Activated T-helper 1 cell treated with anti-CD3 and anti-CD28 coated beads, Interleukin-12 subunit alpha, Interleukin-12 subunit beta, Interleukin-2, Interleukin-4 antibody, amounts not matched to agents 30 ng/mL and 10 ng/mL and 1 ng/mL, durations not matched to agents 14 hours and 24 hours and 36 hours (primary cell): ENCODE measurements at regions of chr16 and their contacts with region 1.

Region 1: GRCh38 chr16:53130159-53131049 is 75.6 kb downstream of the CHD9 start:
- DNase-seq: peak; percentile 92
- H3K4me3 Mint-ChIP-seq: peak overlapping the region; percentile 80
- H3K27ac Mint-ChIP-seq: peak overlapping the region; percentile 79
- H3K4me1 Mint-ChIP-seq: peaks cover 6% of the 10 kb centered on the region
- H3K27me3 Mint-ChIP-seq: peaks cover 9% of the 10 kb centered on the region

Region 2: GRCh38 chr16:53099318-53100130 is 30.9 kb before region 1 on chr16:
- intact Hi-C with region 1: loop called (anchors 1 kb)
- DNase-seq: peak; percentile 52
- H3K4me3 Mint-ChIP-seq: peak overlapping the region; percentile 79
- H3K27ac Mint-ChIP-seq: peak overlapping the region; percentile 93
- H3K4me1 Mint-ChIP-seq: peaks cover 36% of the 10 kb centered on the region
- H3K27me3 Mint-ChIP-seq: no peaks in the 10 kb centered on the region

Region 3: GRCh38 chr16:53207810-53208752 is 77.7 kb after region 1 on chr16:
- intact Hi-C with region 1: loop called (anchors 2 kb)
- DNase-seq: no peak
- H3K4me3 Mint-ChIP-seq: peak overlapping the region; percentile 75
- H3K27ac Mint-ChIP-seq: peak overlapping the region; percentile 76
- H3K4me1 Mint-ChIP-seq: peaks cover 19% of the 10 kb centered on the region
- H3K27me3 Mint-ChIP-seq: no peaks in the 10 kb centered on the region

Region 4: DNA sequence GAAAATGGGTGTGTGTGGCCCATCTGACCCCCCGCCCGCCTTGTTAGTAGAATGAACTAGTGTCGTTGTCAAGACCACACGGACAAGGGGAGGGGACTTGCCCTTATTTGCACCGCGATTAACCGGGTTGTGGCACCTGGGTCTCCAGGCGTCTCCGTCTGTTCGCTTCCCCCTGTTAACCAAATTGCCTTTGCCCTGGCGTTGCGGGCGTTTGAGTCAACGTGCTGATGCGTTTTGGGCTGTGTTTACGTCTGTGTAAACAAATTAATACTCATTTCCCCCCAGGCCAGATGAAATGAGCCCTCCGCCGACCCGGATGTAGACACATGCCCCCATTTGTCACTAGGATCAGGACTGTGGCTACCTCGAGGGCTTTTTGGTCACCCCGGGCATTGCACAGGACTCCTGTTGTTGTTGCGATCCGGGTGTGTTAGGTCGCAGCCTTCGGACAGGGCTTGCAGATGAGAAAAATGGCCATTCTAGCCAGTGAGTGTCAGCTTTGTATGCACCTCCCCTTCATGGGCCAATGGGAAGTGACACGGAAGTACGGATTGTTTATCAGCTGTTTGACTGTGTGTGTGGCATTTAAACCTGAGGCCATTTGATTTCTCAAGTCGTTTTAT is 304.8 kb after region 1 on chr16:
- intact Hi-C with region 1: loop called (anchors 1 kb)
- DNase-seq: peak; percentile 63
- H3K4me3 Mint-ChIP-seq: peak overlapping the region; percentile 99
- H3K27ac Mint-ChIP-seq: peak overlapping the region; percentile 98
- H3K4me1 Mint-ChIP-seq: peaks cover 38% of the 10 kb centered on the region
- H3K27me3 Mint-ChIP-seq: no peaks in the 10 kb centered on the region

Region 5: DNA sequence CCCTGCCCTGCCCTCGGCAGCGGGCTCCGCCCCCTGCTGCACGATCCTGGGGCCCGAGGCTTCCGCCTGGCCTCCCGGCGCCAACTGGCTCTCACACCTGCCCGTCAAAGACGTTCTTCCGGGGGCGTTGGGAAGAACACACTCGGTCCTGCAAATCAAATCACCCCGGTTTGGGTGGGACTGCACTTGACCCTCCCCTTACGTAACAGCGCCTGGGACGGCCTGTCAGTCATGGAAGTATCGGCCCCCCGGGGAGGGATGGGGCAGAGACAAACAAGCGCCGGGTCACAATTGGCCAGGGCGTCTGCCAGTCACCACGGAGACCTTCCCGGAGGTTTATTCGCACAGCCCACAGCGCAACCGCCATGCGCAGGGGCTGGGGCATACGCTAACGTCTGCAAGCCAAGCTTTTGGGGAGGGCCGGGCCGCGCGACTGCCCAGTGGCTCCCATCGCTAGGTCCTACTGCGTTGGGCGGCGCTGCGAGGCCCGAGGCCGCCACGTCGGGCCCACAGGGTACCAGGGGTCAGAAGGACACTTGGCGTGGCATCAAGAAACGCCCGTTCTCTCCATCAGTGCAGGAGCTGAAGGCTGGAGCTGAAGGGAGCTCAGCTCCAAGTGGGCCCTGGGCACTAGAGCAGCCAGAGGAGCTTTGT is 373.0 kb after region 1 on chr16:
- intact Hi-C with region 1: loop called (anchors 1 kb)
- DNase-seq: peak; percentile 100
- H3K4me3 Mint-ChIP-seq: peak overlapping the region; percentile 87
- H3K27ac Mint-ChIP-seq: peak overlapping the region; percentile 93
- H3K4me1 Mint-ChIP-seq: peaks cover 70% of the 10 kb centered on the region
- H3K27me3 Mint-ChIP-seq: no peaks in the 10 kb centered on the region